ENCODE measurements at regions of chr7 and their contacts with region 1.

Region 1: DNA sequence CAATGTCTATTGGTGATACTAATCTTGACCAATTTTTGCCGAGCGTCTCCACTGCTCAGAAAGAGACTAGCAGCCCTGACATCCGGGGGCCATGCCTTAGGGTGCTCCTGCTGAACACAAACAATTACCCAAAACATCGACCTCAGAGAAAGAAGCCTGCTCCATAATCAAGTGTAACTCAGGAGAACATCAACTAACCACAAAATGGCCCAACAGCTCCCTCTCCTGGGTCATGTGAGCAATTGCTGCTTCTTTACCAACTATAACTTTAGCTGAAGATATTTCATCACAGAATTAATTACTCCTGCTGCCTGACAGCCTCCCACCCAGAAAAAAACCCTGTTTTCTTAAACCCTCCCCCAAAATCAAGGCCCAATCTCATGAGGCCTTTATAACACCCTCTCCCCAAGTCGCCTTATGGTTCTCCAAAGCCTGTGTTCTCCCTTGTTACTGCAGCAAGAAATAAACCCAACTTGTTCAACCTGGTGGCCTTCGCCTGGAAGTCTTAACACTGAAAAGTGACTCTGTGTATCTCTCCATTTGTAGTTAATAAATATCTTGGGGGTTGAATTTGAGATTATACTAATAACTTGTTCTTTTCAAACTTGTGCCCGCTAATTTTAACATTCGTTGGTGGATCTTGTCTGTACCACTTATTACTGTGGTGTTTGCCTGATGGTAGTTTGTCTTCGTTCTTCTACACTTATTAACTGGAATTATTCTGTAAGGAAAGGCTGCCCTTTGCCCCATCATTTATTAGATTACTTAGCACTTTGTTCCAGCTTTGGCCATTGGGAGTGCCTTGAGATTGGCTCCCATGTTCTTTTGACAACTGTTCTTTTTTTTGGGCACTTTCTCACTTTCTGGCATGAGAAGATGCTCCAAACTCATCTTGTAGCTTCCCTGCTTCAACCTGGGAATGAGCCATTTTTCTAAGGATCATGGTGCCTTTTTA is 21.2 kb upstream of the RAMP3 start:
- DNase-seq: peak; percentile 81
- H3K4me3 Mint-ChIP-seq: no peak overlapping the region
- H3K27ac Mint-ChIP-seq: peak overlapping the region; percentile 46
- H3K4me1 Mint-ChIP-seq: peaks cover 36% of the 10 kb centered on the region
- H3K27me3 Mint-ChIP-seq: peaks cover 3% of the 10 kb centered on the region

Region 2: GRCh38 chr7:44858161-44858560 is 278.2 kb before region 1 on chr7:
- CTCF ChIA-PET with region 1: interaction called, 21 read pairs
- POLR2A ChIA-PET with region 1: no interaction called
- DNase-seq: no peak
- H3K4me3 Mint-ChIP-seq: no peak overlapping the region
- H3K27ac Mint-ChIP-seq: no peak overlapping the region
- H3K4me1 Mint-ChIP-seq: peaks cover 19% of the 10 kb centered on the region
- H3K27me3 Mint-ChIP-seq: peaks cover 5% of the 10 kb centered on the region

Region 3: GRCh38 chr7:44973610-44974401 is 162.6 kb before region 1 on chr7:
- CTCF ChIA-PET with region 1: interaction called, 100 read pairs
- POLR2A ChIA-PET with region 1: interaction called, 56 read pairs
- DNase-seq: peak; percentile 66
- H3K4me3 Mint-ChIP-seq: peak overlapping the region; percentile 43
- H3K27ac Mint-ChIP-seq: peak overlapping the region; percentile 44
- H3K4me1 Mint-ChIP-seq: peaks cover 55% of the 10 kb centered on the region
- H3K27me3 Mint-ChIP-seq: no peaks in the 10 kb centered on the region

Region 4: GRCh38 chr7:44999245-45000095 is 136.9 kb before region 1 on chr7:
- CTCF ChIA-PET with region 1: interaction called, 15 read pairs
- POLR2A ChIA-PET with region 1: interaction called, 13 read pairs
- DNase-seq: peak; percentile 100
- H3K4me3 Mint-ChIP-seq: peak overlapping the region; percentile 80
- H3K27ac Mint-ChIP-seq: peak overlapping the region; percentile 87
- H3K4me1 Mint-ChIP-seq: peaks cover 59% of the 10 kb centered on the region
- H3K27me3 Mint-ChIP-seq: no peaks in the 10 kb centered on the region

Region 5: GRCh38 chr7:45080265-45080962 is 56.0 kb before region 1 on chr7:
- CTCF ChIA-PET with region 1: interaction called, 7 read pairs
- POLR2A ChIA-PET with region 1: interaction called, 13 read pairs
- DNase-seq: no peak
- H3K4me3 Mint-ChIP-seq: no peak overlapping the region
- H3K27ac Mint-ChIP-seq: no peak overlapping the region
- H3K4me1 Mint-ChIP-seq: peaks cover 4% of the 10 kb centered on the region
- H3K27me3 Mint-ChIP-seq: no peaks in the 10 kb centered on the region

Region 6: GRCh38 chr7:45111298-45112223 is 24.8 kb before region 1 on chr7 and contains the start of gene TBRG4:
- CTCF ChIA-PET with region 1: interaction called, 76 read pairs
- POLR2A ChIA-PET with region 1: interaction called, 62 read pairs
- DNase-seq: peak; percentile 96
- H3K4me3 Mint-ChIP-seq: peak within 1 kb of the TSS; percentile 90
- H3K27ac Mint-ChIP-seq: peak within 1 kb of the TSS; percentile 89
- H3K4me1 Mint-ChIP-seq: peaks cover 50% of the 10 kb centered on the region
- H3K27me3 Mint-ChIP-seq: peaks cover 10% of the 10 kb centered on the region
- total RNA-seq, gene TBRG4: 98.8 to 103 TPM

Region 7: GRCh38 chr7:45146531-45147379 is 10.4 kb after region 1 on chr7:
- CTCF ChIA-PET with region 1: no interaction called
- POLR2A ChIA-PET with region 1: no interaction called
- DNase-seq: no peak
- H3K4me3 Mint-ChIP-seq: no peak overlapping the region
- H3K27ac Mint-ChIP-seq: no peak overlapping the region
- H3K4me1 Mint-ChIP-seq: no peaks in the 10 kb centered on the region
- H3K27me3 Mint-ChIP-seq: peaks cover 28% of the 10 kb centered on the region

Region 8: DNA sequence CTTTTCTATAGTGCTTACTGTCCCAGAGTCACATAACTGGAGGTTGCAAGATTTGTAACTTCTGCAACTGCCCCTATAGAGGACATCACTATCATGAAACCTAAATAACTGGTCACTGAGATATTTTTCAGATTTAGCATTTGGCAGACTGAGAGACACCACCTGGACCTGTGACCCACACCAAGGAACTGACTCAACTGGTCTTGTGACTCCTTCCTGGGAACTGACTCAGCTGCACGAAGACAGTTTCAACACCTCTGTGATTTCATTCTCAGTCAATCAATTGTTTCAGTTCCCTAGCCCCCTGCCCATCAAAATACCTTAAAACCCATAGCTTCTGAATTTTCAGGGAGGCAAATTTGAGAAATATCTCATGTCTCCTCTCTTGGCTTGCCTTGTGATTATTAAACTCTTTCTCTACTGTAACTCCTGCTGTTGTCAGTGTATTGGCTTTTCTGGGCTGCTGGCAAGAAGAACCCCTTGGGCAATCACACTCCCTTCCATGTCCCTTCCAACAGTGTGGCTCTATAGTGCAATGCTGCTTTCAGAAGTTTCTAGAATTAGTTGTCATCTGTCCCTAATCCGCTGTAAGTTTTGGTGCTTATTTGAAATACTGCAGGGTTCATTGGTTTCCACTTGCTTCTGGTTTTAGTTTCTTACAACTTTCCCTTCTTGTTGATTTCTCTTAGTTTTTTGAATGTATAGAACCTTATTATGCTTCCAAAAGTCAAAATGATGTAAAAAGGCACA is 310.0 kb after region 1 on chr7:
- CTCF ChIA-PET with region 1: no interaction called
- POLR2A ChIA-PET with region 1: no interaction called
- DNase-seq: no peak
- H3K4me3 Mint-ChIP-seq: no peak overlapping the region
- H3K27ac Mint-ChIP-seq: no peak overlapping the region
- H3K4me1 Mint-ChIP-seq: no peaks in the 10 kb centered on the region
- H3K27me3 Mint-ChIP-seq: peaks cover 3% of the 10 kb centered on the region